PC-9 (cell line): ENCODE measurements at regions of chr17 and their contacts with region 1.

Region 1: GRCh38 chr17:62688398-62689160 is 61.1 kb downstream of the MRC2 start:
- DNase-seq: no peak
- H3K4me3 ChIP-seq: no peak overlapping the region
- H3K27ac ChIP-seq: no peak overlapping the region
- H3K4me1 ChIP-seq: 0 out of 2 replicates have a peak, but pooled peaks cover under 1% of the 10 kb centered on the region
- H3K27me3 ChIP-seq: no peaks in the 10 kb centered on the region
- CTCF ChIP-seq: no peak

Region 2: DNA sequence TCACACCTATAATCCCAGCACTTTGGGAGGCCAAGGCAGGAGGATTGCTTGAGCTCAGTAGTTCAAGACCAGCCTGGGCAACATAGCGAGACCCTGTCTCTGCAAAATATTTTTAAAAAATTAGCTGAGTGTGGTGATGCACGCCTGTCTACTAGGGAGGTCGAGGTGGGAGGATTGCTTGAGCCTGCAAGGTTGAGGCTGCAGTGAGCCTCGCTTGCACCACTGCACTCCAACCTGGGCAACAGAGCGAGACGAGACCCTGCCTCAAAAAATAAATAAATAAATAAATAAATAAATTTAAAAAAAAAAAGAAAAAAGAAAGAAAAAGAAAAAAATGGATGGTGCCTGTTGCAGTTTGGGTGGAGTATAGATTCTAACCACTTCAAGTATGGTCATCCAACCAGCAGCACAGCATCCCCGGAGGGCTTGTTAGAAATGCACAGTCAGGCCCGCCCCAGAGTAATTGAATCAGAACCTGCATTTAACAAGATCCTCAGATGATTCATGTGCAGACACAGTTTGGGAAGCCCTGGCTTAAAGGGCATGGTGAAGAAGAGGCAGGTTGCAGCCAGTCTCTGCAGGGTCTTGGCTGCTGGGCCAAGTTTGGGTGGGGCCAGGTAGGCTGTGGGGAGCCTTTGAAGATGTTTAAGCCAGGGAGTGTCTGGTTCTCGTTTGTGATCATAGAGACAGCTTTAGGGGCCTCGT is 20.3 kb before region 1 on chr17:
- CTCF ChIA-PET with region 1: no interaction called
- POLR2A ChIA-PET with region 1: no interaction called
- intact Hi-C with region 1: no loop called
- DNase-seq: no peak
- H3K4me3 ChIP-seq: no peak overlapping the region
- H3K27ac ChIP-seq: no peak overlapping the region
- H3K4me1 ChIP-seq: no peaks in the 10 kb centered on the region
- H3K27me3 ChIP-seq: no peaks in the 10 kb centered on the region
- CTCF ChIP-seq: no peak

Region 3: GRCh38 chr17:63332286-63332685 is 643.7 kb after region 1 on chr17:
- CTCF ChIA-PET with region 1: interaction called, 10 read pairs
- POLR2A ChIA-PET with region 1: no interaction called
- intact Hi-C with region 1: no loop called
- DNase-seq: no peak
- H3K4me3 ChIP-seq: no peak overlapping the region
- H3K27ac ChIP-seq: no peak overlapping the region
- H3K4me1 ChIP-seq: no peaks in the 10 kb centered on the region
- H3K27me3 ChIP-seq: no peaks in the 10 kb centered on the region
- CTCF ChIP-seq: no peak